ENCODE measurements at regions of chr6 and their contacts with region 1.

Region 1: GRCh38 chr6:163563318-163563717 is 148.8 kb downstream of the QKI start:
- DNase-seq: no peak
- H3K4me3 ChIP-seq: no peak overlapping the region
- H3K27ac ChIP-seq: no peak overlapping the region
- H3K4me1 ChIP-seq: no peaks in the 10 kb centered on the region
- H3K27me3 ChIP-seq: no peaks in the 10 kb centered on the region
- CTCF ChIP-seq: no peak

Region 2: DNA sequence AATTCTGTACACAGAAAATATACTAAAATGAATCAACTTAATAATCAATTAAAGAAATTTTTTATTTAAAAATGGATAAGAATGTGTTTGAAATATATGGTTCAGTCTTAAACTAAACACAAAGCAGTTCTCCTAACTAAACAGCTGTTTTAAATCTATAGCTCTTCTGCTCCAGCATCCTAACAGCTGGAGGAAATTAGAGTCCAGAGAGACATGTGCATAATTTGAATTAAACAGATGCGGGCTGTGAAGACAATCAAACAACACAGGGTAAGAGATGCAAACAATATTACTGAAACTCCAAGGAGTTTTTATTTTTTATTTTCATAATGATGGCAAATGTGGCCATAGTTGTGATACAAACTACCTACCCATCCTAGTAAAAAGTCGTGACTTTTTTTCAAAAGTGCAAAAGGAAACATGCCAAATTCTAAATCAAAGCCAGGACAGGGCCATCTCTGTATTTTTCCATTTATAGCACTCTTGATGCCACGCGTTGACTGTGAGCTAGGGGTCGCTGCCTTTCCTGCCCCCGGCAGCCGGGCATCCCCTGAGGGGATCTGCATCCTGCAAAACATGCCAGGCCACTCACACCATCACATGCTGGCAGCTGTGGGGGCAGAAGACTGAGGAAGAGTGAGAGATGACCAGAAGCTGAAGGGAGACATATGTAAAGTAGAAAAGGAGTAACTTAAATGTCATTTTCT is 1146.3 kb before region 1 on chr6:
- CTCF ChIA-PET with region 1: no interaction called
- POLR2A ChIA-PET with region 1: no interaction called
- intact Hi-C with region 1: no loop called
- DNase-seq: no peak
- H3K4me3 ChIP-seq: no peak overlapping the region
- H3K27ac ChIP-seq: no peak overlapping the region
- H3K4me1 ChIP-seq: no peaks in the 10 kb centered on the region
- H3K27me3 ChIP-seq: peaks cover 42% of the 10 kb centered on the region
- CTCF ChIP-seq: no peak

Region 3: DNA sequence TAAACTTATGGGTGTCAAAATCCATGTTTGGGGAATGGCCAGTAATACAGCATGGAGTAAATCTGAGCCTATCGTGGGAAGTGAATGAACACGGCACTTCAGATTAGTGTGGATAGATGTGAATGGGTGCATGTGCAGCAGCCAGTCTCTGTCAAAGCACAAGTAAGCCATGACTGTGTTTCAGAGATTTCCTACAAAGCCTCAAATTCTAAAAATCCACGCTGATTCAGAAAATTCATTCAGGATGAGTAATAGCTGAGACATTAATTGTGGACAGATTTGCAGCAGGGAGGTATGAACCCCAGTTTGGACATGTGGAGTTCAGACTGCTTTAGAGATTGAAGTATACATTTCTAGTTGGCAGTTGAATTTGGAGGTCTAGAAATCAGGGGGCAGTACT is 33.7 kb before region 1 on chr6:
- CTCF ChIA-PET with region 1: no interaction called
- POLR2A ChIA-PET with region 1: no interaction called
- intact Hi-C with region 1: loop called (anchors 5 kb)
- DNase-seq: no peak
- H3K4me3 ChIP-seq: no peak overlapping the region
- H3K27ac ChIP-seq: no peak overlapping the region
- H3K4me1 ChIP-seq: peaks cover 20% of the 10 kb centered on the region
- H3K27me3 ChIP-seq: no peaks in the 10 kb centered on the region
- CTCF ChIP-seq: no peak

Region 4: DNA sequence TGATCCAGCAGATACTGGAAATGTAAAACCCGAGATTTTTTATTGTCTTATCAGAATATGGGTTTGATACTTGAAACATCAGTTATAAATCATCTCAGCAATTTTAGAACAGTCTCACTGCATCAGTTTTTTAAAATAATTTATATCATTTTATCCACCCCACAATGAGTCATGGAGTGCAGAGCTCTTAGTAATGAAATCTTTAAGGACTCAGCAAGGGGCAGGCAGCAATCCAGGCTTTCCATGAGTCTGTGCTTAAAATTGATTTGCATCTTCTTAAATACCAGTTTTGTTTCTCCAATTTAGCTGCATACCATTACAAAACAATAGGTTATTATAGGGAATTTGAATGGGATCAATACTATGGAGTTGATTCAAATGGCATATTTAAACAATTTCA is 913.8 kb after region 1 on chr6:
- CTCF ChIA-PET with region 1: no interaction called
- POLR2A ChIA-PET with region 1: no interaction called
- intact Hi-C with region 1: no loop called
- DNase-seq: no peak
- H3K4me3 ChIP-seq: no peak overlapping the region
- H3K27ac ChIP-seq: no peak overlapping the region
- H3K4me1 ChIP-seq: no peaks in the 10 kb centered on the region
- H3K27me3 ChIP-seq: no peaks in the 10 kb centered on the region
- CTCF ChIP-seq: no peak

Measured in PC-9 (cell line).